ENCODE measurements at regions of chr6 and their contacts with region 1.

Region 1: GRCh38 chr6:10411971-10412745 is 2.7 kb downstream of the TFAP2A start:
- DNase-seq: peak; percentile 94
- H3K4me3 Mint-ChIP-seq: peak overlapping the region; percentile 94
- H3K27ac Mint-ChIP-seq: peak overlapping the region; percentile 99
- H3K4me1 Mint-ChIP-seq: peaks cover 12% of the 10 kb centered on the region
- H3K27me3 Mint-ChIP-seq: no peaks in the 10 kb centered on the region
- CTCF ChIP-seq: no peak

Region 2: DNA sequence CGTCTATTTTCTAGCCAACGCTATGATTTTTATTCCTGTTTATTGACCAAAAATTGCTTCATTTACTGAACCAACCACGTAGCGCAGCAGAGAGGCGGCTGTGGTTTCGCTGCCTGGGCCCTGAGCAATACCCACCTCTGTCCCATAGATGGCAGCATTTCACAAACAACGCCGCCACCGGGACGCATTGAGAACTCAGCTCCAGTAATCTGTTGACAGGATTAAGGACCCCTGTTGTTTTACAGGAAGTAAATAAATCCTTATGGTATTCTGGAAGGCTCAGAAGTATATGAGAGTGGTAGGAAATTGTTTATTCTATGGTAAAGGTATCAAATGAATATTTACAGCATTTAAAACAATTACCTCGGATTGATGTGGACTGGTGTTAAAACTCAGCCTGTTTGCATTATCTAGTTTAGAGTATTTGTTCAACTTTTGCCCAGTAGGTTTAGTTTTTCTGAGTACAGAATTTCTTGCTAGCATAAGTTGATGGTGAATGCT is 1428.9 kb before region 1 on chr6:
- CTCF ChIA-PET with region 1: interaction called, 5 read pairs
- POLR2A ChIA-PET with region 1: interaction called, 12 read pairs
- intact Hi-C with region 1: loop called (anchors 1 kb)
- DNase-seq: peak; percentile 74
- H3K4me3 Mint-ChIP-seq: no peak overlapping the region
- H3K27ac Mint-ChIP-seq: no peak overlapping the region
- H3K4me1 Mint-ChIP-seq: no peaks in the 10 kb centered on the region
- H3K27me3 Mint-ChIP-seq: no peaks in the 10 kb centered on the region
- CTCF ChIP-seq: peak; percentile 95

Region 3: DNA sequence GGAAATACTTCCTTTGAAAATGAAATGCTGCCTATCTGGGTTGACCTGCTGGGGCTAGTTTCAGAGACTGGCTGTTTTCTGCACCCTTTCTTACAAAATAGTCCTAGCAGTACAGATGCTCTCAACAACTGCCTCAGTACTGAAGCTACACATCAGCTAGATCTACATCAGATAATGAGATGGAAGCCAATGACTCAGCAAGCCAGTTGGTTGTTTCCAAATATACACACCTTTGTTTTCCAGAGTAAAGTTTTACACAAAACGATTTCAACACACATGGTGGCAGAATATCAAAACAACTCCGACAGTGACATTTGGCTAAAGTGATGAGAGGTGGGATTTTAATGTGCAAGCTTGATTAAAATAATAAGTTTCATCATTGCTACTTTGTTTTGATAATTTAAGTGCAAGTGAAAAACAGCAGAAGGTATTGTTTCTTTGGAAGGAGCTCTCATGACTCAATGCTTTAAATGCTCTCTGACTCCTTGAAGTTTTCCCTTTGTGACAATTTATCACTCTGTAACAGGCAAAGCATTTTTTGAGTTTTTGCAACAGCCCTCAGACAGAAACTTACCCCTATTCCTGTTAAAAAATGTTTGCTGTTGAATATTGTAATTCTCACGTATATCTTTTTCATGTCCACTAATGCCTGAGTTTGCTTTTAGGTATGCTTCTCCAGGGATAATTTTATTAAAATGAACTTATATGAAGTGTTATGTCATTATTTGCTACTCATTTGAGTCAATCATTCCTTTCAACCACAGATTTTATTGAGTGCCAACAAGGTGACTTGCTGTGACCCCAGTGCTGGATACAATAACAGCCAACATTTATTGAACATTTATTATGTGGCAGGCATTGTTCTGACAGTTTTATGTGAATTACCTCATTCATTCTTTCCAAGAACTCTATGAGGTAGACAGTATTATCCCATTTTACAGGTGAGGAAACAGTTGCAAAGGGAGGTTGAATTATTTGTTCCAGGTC is 879.3 kb before region 1 on chr6:
- CTCF ChIA-PET with region 1: interaction called, 8 read pairs
- POLR2A ChIA-PET with region 1: interaction called, 26 read pairs
- intact Hi-C with region 1: no loop called
- DNase-seq: peak; percentile 79
- H3K4me3 Mint-ChIP-seq: no peak overlapping the region
- H3K27ac Mint-ChIP-seq: peak overlapping the region; percentile 17
- H3K4me1 Mint-ChIP-seq: peaks cover 10% of the 10 kb centered on the region
- H3K27me3 Mint-ChIP-seq: no peaks in the 10 kb centered on the region
- CTCF ChIP-seq: no peak

Region 4: DNA sequence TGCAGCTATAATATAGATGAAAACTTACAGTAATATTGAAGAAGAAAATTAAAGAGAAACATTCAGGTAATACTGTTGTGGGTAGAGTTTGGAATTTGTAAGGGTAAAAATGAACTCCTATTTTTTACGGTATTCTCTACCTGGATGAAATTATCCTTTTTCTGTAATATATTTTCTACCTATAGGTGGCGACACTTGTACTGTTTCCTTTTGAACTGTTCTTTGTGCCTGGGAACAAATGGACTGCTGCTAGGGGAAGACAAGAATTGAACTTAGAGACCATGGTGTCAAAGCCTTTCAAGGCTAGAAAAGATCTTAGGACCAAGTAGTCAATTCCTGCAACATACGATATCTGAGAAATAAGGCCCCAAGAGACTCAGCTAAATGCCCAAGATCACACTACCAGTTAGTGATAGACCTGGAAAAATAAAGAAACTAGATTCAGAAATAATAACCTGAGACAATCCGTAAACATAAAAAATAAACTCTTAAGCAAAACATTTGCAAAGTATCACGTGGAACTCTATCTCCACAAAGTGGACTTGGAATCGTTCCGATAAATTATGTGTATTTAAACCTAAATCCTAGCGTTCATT is 381.1 kb before region 1 on chr6:
- CTCF ChIA-PET with region 1: interaction called, 10 read pairs
- POLR2A ChIA-PET with region 1: interaction called, 6 read pairs
- intact Hi-C with region 1: loop called (anchors 1 kb)
- DNase-seq: peak; percentile 49
- H3K4me3 Mint-ChIP-seq: no peak overlapping the region
- H3K27ac Mint-ChIP-seq: no peak overlapping the region
- H3K4me1 Mint-ChIP-seq: peaks cover 7% of the 10 kb centered on the region
- H3K27me3 Mint-ChIP-seq: no peaks in the 10 kb centered on the region
- CTCF ChIP-seq: peak; percentile 54

Region 5: DNA sequence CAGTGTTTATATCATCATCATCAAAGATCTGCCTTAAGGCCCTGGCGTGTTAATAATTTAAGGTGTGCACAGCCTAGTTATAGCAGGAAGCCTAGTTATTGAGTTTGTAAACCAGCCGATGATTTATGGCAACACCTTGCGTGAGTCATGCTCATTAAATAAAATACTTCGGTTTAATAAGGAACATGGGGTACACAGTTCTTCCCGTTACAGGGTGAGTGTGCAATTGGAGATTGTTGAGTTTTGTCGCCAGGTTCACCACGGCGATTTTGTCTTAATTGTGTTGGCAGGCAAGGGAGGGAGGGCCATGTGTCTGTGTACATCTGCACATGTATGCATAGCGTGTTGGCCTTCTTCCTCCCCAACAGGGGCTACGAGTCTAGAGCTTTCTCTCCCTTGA is 101.3 kb before region 1 on chr6:
- CTCF ChIA-PET with region 1: no interaction called
- POLR2A ChIA-PET with region 1: interaction called, 17 read pairs
- intact Hi-C with region 1: no loop called
- DNase-seq: peak; percentile 56
- H3K4me3 Mint-ChIP-seq: peak overlapping the region; percentile 24
- H3K27ac Mint-ChIP-seq: peak overlapping the region; percentile 55
- H3K4me1 Mint-ChIP-seq: peaks cover 31% of the 10 kb centered on the region
- H3K27me3 Mint-ChIP-seq: no peaks in the 10 kb centered on the region
- CTCF ChIP-seq: no peak

Region 6: GRCh38 chr6:10434692-10435376 is 22.7 kb after region 1 on chr6:
- CTCF ChIA-PET with region 1: interaction called, 50 read pairs
- POLR2A ChIA-PET with region 1: interaction called, 763 read pairs
- intact Hi-C with region 1: no loop called
- DNase-seq: peak; percentile 71
- H3K4me3 Mint-ChIP-seq: peak overlapping the region; percentile 61
- H3K27ac Mint-ChIP-seq: peak overlapping the region; percentile 91
- H3K4me1 Mint-ChIP-seq: peaks cover 32% of the 10 kb centered on the region
- H3K27me3 Mint-ChIP-seq: no peaks in the 10 kb centered on the region
- CTCF ChIP-seq: peak; percentile 55

Measured in MCF 10A (cell line).